Activated naive CD4-positive, alpha-beta T cell treated with anti-CD3 and anti-CD28 coated beads for 36 hours (primary cell): ENCODE measurements at regions of chr2 and their contacts with region 1.

Region 1: GRCh38 chr2:137947728-137948336 is 16.4 kb upstream of the HNMT start:
- DNase-seq: peak; percentile 63
- H3K4me3 Mint-ChIP-seq: no peak overlapping the region
- H3K27ac Mint-ChIP-seq: no peak overlapping the region
- H3K4me1 Mint-ChIP-seq: peaks cover 6% of the 10 kb centered on the region
- H3K27me3 Mint-ChIP-seq: no peaks in the 10 kb centered on the region

Region 2: GRCh38 chr2:137960223-137960622 is 12.4 kb after region 1 on chr2:
- CTCF ChIA-PET with region 1: no interaction called
- intact Hi-C with region 1: loop called (anchors 1 kb)
- DNase-seq: no peak
- H3K4me3 Mint-ChIP-seq: no peak overlapping the region
- H3K27ac Mint-ChIP-seq: no peak overlapping the region
- H3K4me1 Mint-ChIP-seq: no peaks in the 10 kb centered on the region
- H3K27me3 Mint-ChIP-seq: peaks cover 11% of the 10 kb centered on the region

Region 3: GRCh38 chr2:138373993-138374408 is 426.2 kb after region 1 on chr2:
- CTCF ChIA-PET with region 1: no interaction called
- intact Hi-C with region 1: loop called (anchors 1 kb)
- DNase-seq: no peak
- H3K4me3 Mint-ChIP-seq: no peak overlapping the region
- H3K27ac Mint-ChIP-seq: no peak overlapping the region
- H3K4me1 Mint-ChIP-seq: no peaks in the 10 kb centered on the region
- H3K27me3 Mint-ChIP-seq: peaks cover 5% of the 10 kb centered on the region

Region 4: DNA sequence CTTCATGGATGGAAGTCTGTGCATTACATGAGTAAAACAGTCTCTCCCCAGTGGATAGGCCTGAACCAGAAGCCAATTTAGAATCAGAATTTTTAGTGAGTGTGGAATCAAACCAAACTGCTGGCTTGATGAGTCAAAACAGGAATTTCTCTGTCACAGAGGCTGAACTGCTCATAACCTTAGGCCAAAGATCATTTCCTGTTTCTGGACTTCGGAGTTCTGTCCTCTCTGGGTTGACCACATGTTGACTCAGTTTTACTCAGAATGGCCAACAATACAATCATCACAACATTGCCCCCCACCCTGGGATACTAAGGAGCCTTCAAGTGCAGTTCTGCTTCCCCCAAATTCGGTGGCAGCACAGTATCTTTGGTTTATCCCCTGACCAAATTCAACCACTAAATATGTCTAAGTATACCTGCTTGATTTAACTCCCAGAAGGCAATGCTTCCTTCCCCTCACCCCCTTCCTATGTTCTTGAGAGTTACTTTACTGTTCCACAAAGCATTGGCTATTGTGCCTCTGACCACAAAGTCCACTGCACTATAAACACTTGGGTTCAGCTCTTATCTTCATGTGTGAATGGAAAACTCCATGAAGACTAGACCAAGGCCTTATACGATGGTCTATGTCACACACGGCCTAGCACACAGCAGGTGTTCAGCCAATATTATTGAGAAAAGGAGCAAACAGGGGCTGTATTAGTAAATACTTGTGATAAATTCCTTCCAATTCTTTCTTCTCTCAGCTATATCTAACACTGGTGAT is 764.6 kb after region 1 on chr2:
- CTCF ChIA-PET with region 1: no interaction called
- intact Hi-C with region 1: loop called (anchors 5 kb)
- DNase-seq: no peak
- H3K4me3 Mint-ChIP-seq: no peak overlapping the region
- H3K27ac Mint-ChIP-seq: no peak overlapping the region
- H3K4me1 Mint-ChIP-seq: no peaks in the 10 kb centered on the region
- H3K27me3 Mint-ChIP-seq: peaks cover 10% of the 10 kb centered on the region

Region 5: GRCh38 chr2:138827426-138828054 is 879.7 kb after region 1 on chr2:
- CTCF ChIA-PET with region 1: no interaction called
- intact Hi-C with region 1: loop called (anchors 1 kb)
- DNase-seq: peak; percentile 30
- H3K4me3 Mint-ChIP-seq: no peak overlapping the region
- H3K27ac Mint-ChIP-seq: no peak overlapping the region
- H3K4me1 Mint-ChIP-seq: no peaks in the 10 kb centered on the region
- H3K27me3 Mint-ChIP-seq: peaks cover 6% of the 10 kb centered on the region